ENCODE measurements at regions of chr1 and their contacts with region 1.

Region 1: DNA sequence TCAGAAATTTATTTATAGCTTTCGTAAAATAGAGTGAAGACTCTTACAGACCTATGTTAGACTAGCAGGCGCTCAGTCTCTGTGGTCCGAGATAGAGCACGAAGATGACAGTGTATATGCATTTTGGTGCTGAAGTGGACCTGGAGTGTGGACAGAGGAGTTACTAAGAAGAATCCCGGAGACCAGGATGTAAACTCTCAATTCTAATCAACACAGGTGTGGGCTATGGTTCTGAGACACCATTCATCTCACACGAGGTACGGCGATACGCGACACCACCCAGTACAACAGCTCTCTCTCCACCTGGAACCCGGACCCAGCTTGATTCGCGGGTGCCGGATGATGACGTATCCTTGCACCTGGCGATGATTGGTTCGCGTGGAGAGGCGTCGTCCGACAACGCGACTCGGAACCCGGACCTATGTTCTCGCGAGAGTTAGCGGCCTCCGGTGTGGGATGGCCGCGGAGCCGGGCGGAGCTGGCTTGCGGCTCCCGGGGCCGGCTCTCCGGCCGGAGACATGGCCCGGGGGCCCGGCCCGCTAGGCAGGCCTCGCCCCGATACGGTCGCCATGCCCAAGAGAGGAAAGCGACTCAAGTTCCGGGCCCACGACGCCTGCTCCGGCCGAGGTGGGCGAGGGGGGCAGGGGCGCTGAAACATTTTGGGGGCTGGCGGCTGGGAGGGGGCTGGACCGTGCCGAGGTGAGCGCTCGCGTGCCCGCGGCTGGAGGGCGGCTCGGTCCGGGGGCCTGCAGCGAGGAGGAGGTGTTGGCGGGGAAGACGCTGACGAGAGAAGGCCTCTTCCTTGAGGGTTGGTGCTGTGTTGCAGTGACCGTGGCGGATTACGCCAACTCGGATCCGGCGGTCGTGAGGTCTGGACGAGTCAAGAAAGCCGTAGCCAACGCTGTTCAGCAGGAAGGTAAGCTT is at the start of gene TMEM183A:
- DNase-seq: peak; percentile 99
- H3K4me3 ChIP-seq: peak within 1 kb of the TSS; percentile 69 to 97 (median 81)
- H3K27ac ChIP-seq: peak within 1 kb of the TSS; percentile 88 to 96 (median 93)
- H3K4me1 ChIP-seq: peaks cover 0 to 30% (median 26%) of the 10 kb centered on the region in 4 donors
- H3K27me3 ChIP-seq: no peaks in the 10 kb centered on the region
- CTCF ChIP-seq: no peak
- EP300 ChIP-seq: no peak
- POLR2A ChIP-seq: peak; percentile 82 to 91
- total RNA-seq, gene TMEM183A: 71.7 to 99.4 (median 88.2) TPM

Region 2: DNA sequence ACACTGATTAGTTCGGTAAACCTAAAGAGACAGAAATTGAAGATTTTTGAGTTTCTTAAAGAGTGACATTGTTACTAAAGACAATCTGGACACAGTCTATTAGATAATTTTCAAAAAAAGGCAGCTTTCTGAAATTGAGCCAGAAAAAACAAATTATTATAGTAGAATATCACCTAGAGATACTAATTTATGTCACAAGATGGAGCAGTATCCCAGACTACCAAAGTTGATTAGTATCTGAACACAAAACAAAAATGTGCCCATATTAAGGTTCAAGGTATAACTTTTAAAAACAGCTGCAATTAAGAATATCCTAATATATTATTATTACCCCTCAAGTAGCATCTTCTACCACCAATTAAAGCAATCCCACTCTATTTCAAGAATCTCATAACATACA is 256.5 kb before region 1 on chr1:
- intact Hi-C with region 1: loop called (anchors 10 kb)
- DNase-seq: no peak
- H3K4me3 ChIP-seq: no peak overlapping the region
- H3K27ac ChIP-seq: no peak overlapping the region
- H3K4me1 ChIP-seq: no peaks in the 10 kb centered on the region
- H3K27me3 ChIP-seq: no peaks in the 10 kb centered on the region
- CTCF ChIP-seq: no peak
- EP300 ChIP-seq: no peak
- POLR2A ChIP-seq: no peak

Region 3: DNA sequence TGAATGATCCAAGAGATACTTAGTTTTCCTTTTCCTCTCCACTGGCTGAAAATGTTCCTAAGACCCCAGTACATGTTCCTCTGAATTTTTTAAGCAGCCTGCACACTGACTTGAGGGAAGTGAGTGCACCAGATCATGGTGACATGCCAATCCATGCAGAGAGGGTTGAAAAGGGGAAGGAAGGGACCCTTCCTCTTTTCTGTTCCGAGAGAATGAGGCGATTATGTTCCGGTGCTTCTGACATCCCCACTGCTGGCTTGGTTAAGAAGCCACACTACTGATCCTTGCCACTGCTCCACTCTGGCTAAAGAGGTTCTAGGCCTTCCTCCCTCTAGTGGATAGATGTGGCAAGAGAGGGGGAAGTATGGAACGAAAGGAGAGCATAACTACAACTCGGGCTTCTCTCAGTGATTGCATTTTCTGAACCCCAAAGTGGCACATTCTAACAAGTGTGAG is 38.3 kb before region 1 on chr1:
- intact Hi-C with region 1: loop called (anchors 2 kb)
- DNase-seq: peak; percentile 74
- H3K4me3 ChIP-seq: no peak overlapping the region
- H3K27ac ChIP-seq: peak overlapping the region in 2 of 4 donors; percentile 95 to 96
- H3K4me1 ChIP-seq: peaks cover 0 to 29% (median 16%) of the 10 kb centered on the region in 4 donors
- H3K27me3 ChIP-seq: no peaks in the 10 kb centered on the region
- CTCF ChIP-seq: peak; percentile 31 to 52 (median 35)
- EP300 ChIP-seq: no peak
- POLR2A ChIP-seq: no peak